ENCODE measurements at regions of chr11 and their contacts with region 1.

Region 1: GRCh38 chr11:94897330-94897768 is 76.0 kb downstream of the CWC15 start:
- DNase-seq: peak; percentile 61
- H3K4me3 ChIP-seq: no peak overlapping the region
- H3K27ac ChIP-seq: no peak overlapping the region
- H3K4me1 ChIP-seq: peaks cover 11% of the 10 kb centered on the region
- H3K27me3 ChIP-seq: no peaks in the 10 kb centered on the region
- CTCF ChIP-seq: peak; percentile 81 to 85
- POLR2A ChIP-seq: no peak

Region 2: GRCh38 chr11:94543695-94544645 is 353.4 kb before region 1 on chr11 and contains the start of gene FUT4:
- CTCF ChIA-PET with region 1: no interaction called
- POLR2A ChIA-PET with region 1: no interaction called
- dilution Hi-C with region 1: no loop called
- intact Hi-C with region 1: loop called (anchors 10 kb)
- DNase-seq: peak; percentile 80
- H3K4me3 ChIP-seq: peak within 1 kb of the TSS; percentile 11 to 57 (median 41)
- H3K27ac ChIP-seq: peak within 1 kb of the TSS; percentile 55
- H3K4me1 ChIP-seq: peaks cover 12% of the 10 kb centered on the region
- H3K27me3 ChIP-seq: peaks cover 4 to 9% of the 10 kb centered on the region in 2 experiments
- CTCF ChIP-seq: no peak
- POLR2A ChIP-seq: peak; percentile 76
- total RNA-seq, gene FUT4: 4.4 and 5.3 TPM in 2 replicates

Region 3: DNA sequence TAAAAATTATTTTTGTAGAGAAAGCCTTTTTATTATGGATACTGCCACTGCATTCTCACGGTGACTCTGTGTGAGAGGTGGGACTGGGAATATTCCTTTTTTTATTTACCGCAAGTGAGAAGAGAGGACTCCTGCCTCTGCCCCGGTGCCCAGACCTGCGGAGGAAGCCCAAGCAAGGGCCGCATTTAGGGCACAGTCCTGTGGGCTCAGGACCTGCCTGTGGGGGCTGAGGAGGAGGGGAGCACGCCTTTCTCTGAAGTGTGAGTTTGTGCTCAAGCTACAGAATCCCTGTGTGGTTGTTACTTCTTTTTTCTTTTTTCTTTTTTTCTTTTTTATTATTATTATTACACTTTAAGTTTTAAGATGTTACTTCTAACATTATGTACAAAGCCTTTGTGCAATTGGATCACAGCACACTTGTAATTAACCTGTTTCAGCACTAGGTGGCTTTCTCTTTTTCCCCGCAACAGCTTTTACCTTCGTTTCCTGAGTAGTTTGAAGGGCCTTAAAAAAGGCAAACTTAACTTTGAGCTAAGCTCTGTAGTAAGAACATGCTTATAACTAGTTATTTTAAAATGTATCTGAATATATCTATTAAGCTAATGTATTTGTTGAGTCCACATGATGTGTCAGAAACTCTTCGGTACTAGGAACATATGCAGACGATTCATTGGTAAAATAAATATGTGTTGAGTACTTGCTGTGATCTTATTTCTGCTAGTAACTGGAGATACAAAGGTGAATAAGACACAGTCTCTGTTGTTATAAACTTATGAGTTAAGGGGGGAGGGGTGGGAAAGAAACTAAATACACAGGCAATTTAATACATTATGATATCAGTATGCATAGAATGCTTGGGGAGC is 110.9 kb before region 1 on chr11:
- CTCF ChIA-PET with region 1: interaction called, 12 read pairs
- POLR2A ChIA-PET with region 1: no interaction called
- dilution Hi-C with region 1: no loop called
- intact Hi-C with region 1: no loop called
- DNase-seq: peak; percentile 63
- H3K4me3 ChIP-seq: no peak overlapping the region
- H3K27ac ChIP-seq: no peak overlapping the region
- H3K4me1 ChIP-seq: peaks cover 20% of the 10 kb centered on the region
- H3K27me3 ChIP-seq: no peaks in the 10 kb centered on the region
- CTCF ChIP-seq: peak; percentile 36 to 57
- POLR2A ChIP-seq: no peak

Region 4: DNA sequence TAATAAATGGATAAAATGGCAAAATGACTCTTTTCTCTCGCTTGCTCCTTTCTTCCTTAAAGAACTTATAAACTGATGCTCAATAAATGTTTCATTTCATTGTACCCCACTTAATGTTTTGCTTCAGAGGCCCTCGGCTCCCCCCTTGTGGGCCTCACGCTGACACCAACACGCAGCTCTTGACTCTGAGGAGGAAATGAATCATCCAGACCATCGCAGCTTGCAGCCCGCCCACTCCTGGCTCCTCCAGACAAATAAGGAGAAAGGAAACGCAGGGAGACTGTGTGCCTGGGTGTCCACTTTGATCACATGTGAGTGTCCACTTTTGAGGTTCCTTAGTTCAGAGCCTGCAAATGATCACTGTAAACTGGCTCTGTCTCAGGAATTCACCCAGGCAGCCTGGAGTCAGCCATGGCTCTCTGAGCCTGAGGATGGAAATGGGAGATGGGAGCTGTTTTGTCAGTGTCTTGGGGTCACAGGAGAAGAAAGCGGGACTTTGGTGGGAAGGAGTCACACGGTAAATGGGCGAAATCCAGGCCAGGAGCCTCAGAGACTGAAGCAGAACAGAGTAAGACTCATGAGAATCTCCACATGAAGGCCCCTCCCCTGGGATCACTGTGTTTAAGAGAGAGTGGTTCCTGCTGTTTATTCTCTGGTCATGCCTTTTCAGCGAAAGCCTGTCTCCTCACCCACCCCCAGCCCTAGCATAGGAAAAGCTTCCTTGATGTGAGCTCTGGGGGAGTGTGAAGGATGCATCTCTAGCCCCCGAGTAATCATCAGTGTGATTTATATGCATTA is 20.5 kb before region 1 on chr11:
- CTCF ChIA-PET with region 1: interaction called, 10 read pairs
- POLR2A ChIA-PET with region 1: no interaction called
- dilution Hi-C with region 1: no loop called
- intact Hi-C with region 1: loop called (anchors 2 kb)
- DNase-seq: peak; percentile 94
- H3K4me3 ChIP-seq: no peak overlapping the region
- H3K27ac ChIP-seq: peak overlapping the region; percentile 75
- H3K4me1 ChIP-seq: peaks cover 14% of the 10 kb centered on the region
- H3K27me3 ChIP-seq: no peaks in the 10 kb centered on the region
- CTCF ChIP-seq: peak; percentile 28 to 32
- POLR2A ChIP-seq: no peak

Region 5: DNA sequence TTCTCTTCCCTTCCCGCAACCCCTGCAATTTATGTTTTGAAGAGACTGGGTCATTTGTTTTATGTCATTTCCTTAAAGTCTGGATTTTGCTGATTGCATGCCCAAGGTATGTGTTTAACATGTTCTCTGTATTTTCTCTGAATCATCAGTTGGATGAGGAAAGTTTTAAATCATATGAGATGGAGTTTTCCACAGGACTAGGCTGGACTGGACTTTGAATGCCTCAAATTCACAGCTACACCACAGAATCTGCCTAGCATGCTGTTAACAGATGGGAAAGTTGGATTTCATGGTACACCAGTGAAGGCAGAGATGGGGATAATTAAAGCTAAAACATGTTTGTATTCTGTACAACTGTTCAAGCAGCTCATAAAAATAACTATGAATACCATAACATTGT is 13.4 kb after region 1 on chr11:
- CTCF ChIA-PET with region 1: interaction called, 13 read pairs
- POLR2A ChIA-PET with region 1: no interaction called
- dilution Hi-C with region 1: no loop called
- intact Hi-C with region 1: no loop called
- DNase-seq: peak; percentile 44
- H3K4me3 ChIP-seq: no peak overlapping the region
- H3K27ac ChIP-seq: no peak overlapping the region
- H3K4me1 ChIP-seq: no peaks in the 10 kb centered on the region
- H3K27me3 ChIP-seq: no peaks in the 10 kb centered on the region
- CTCF ChIP-seq: no peak
- POLR2A ChIP-seq: no peak

Region 6: GRCh38 chr11:94938095-94939055 is 41.0 kb after region 1 on chr11:
- CTCF ChIA-PET with region 1: interaction called, 18 read pairs
- POLR2A ChIA-PET with region 1: no interaction called
- dilution Hi-C with region 1: no loop called
- intact Hi-C with region 1: loop called (anchors 1 kb)
- DNase-seq: peak; percentile 90
- H3K4me3 ChIP-seq: no peak overlapping the region
- H3K27ac ChIP-seq: peak overlapping the region; percentile 37
- H3K4me1 ChIP-seq: peaks cover 41% of the 10 kb centered on the region
- H3K27me3 ChIP-seq: no peaks in the 10 kb centered on the region
- CTCF ChIP-seq: no peak
- POLR2A ChIP-seq: no peak

Region 7: GRCh38 chr11:95035316-95035715 is 138.0 kb after region 1 on chr11:
- CTCF ChIA-PET with region 1: no interaction called
- POLR2A ChIA-PET with region 1: no interaction called
- dilution Hi-C with region 1: no loop called
- intact Hi-C with region 1: no loop called
- DNase-seq: no peak
- H3K4me3 ChIP-seq: no peak overlapping the region
- H3K27ac ChIP-seq: no peak overlapping the region
- H3K4me1 ChIP-seq: no peaks in the 10 kb centered on the region
- H3K27me3 ChIP-seq: no peaks in the 10 kb centered on the region
- CTCF ChIP-seq: no peak
- POLR2A ChIP-seq: no peak

Measured in endothelial cell of umbilical vein (primary cell).